CD8-positive, alpha-beta T cell (primary cell): ENCODE measurements at regions of chr15 and their contacts with region 1.

Region 1: DNA sequence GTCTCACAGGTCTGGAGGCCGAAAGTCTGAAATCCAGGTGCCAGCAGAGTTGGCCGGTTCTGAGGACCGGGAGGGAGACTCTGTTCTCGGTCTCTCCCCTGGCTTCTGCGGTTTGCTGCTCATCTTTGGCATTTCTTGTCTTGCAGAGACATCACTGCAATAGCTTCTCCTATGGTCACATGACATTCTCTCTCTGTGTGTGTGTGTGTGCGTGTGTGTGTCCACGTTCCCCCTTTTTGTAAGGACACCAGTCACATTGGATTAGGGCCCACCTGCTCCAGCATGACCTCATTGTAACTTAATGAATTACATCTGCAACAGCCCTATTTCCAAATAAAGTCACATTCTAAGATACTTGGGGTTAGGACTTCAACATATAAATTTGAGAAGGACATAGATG is 12.4 kb upstream of the ATP10A start:
- DNase-seq: no peak
- ATAC-seq: no peak
- H3K4me3 ChIP-seq: no peak overlapping the region
- H3K4me3 Mint-ChIP-seq: no peak overlapping the region
- H3K27ac ChIP-seq: no peak overlapping the region
- H3K27ac Mint-ChIP-seq: no peak overlapping the region
- H3K4me1 ChIP-seq: no peaks in the 10 kb centered on the region
- H3K4me1 Mint-ChIP-seq: no peaks in the 10 kb centered on the region
- H3K27me3 ChIP-seq: no peaks in the 10 kb centered on the region
- H3K27me3 Mint-ChIP-seq: no peaks in the 10 kb centered on the region
- CTCF ChIP-seq: no peak

Region 2: DNA sequence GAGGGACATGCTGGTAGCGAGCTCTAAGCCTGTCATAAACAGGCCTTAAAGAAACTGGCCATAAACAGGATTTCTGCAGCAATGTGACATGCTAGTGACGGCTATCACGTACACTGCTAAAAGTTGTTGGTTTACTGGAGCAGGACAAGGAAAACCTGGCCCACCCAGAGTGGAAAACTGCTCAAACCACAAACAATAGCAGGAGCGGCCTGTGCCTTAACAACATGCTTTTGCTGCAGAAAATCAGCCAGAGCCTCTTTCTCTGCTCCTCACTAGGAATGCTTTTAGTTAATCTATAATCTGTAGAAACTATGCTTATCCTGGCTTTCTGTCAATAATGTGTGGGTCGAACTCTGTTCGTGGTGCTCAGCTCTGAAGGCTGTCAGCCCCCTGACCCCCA is 233.8 kb before region 1 on chr15:
- CTCF ChIA-PET with region 1: no interaction called
- POLR2A ChIA-PET with region 1: no interaction called
- intact Hi-C with region 1: no loop called
- DNase-seq: no peak
- ATAC-seq: no peak
- H3K4me3 ChIP-seq: no peak overlapping the region
- H3K4me3 Mint-ChIP-seq: no peak overlapping the region
- H3K27ac ChIP-seq: no peak overlapping the region
- H3K27ac Mint-ChIP-seq: no peak overlapping the region
- H3K4me1 ChIP-seq: no peaks in the 10 kb centered on the region
- H3K4me1 Mint-ChIP-seq: no peaks in the 10 kb centered on the region
- H3K27me3 ChIP-seq: no peaks in the 10 kb centered on the region
- H3K27me3 Mint-ChIP-seq: peaks cover 15% of the 10 kb centered on the region
- CTCF ChIP-seq: no peak

Region 3: DNA sequence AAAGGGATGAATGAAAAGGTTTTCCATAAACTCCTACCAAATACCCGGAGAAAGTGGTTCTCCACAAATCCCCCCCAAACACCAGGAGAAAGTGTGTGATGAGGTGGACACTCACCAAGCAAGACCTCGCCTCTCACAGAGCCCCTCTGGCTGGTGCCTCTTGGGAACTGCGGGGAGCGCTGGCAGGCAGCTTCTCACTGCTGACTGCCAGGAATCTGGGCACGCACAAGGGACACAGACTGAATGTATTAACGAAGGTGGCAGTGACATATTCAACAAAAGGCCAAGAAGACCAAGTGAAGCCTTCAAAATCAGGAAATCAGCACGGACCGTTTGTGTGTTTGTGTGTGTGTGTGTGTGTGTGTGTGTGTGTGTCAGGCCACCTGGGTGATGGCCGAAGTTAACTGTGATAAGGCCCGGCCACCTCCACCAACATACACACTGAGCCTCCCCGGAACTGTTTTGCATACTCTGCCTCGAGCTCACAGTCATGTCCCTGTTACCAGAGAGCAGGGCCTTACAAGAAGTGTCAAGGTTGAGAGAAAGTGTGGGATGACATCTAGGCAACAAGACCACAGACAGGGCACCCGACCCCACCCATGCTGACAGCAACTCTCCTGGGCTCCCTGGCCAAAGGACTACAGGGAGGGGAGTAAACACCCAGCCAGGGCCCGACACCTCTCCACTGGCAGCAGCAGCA is 30.4 kb before region 1 on chr15:
- CTCF ChIA-PET with region 1: no interaction called
- POLR2A ChIA-PET with region 1: no interaction called
- intact Hi-C with region 1: loop called in 1 of 2 experiments (anchors 5 kb)
- DNase-seq: no peak
- ATAC-seq: no peak
- H3K4me3 ChIP-seq: no peak overlapping the region
- H3K4me3 Mint-ChIP-seq: peak overlapping the region; percentile 29
- H3K27ac ChIP-seq: peak overlapping the region; percentile 31 to 86
- H3K27ac Mint-ChIP-seq: peak overlapping the region; percentile 96
- H3K4me1 ChIP-seq: peaks cover 56% of the 10 kb centered on the region
- H3K4me1 Mint-ChIP-seq: peaks cover 67% of the 10 kb centered on the region
- H3K27me3 ChIP-seq: no peaks in the 10 kb centered on the region
- H3K27me3 Mint-ChIP-seq: no peaks in the 10 kb centered on the region
- CTCF ChIP-seq: no peak

Region 4: GRCh38 chr15:25947323-25948314 is 72.1 kb after region 1 on chr15:
- CTCF ChIA-PET with region 1: no interaction called
- POLR2A ChIA-PET with region 1: no interaction called
- intact Hi-C with region 1: no loop called
- DNase-seq: no peak
- ATAC-seq: no peak
- H3K4me3 ChIP-seq: no peak overlapping the region
- H3K4me3 Mint-ChIP-seq: no peak overlapping the region
- H3K27ac ChIP-seq: no peak overlapping the region
- H3K27ac Mint-ChIP-seq: no peak overlapping the region
- H3K4me1 ChIP-seq: no peaks in the 10 kb centered on the region
- H3K4me1 Mint-ChIP-seq: peaks cover 2% of the 10 kb centered on the region
- H3K27me3 ChIP-seq: no peaks in the 10 kb centered on the region
- H3K27me3 Mint-ChIP-seq: no peaks in the 10 kb centered on the region
- CTCF ChIP-seq: no peak